ENCODE measurements at regions of chr15 and their contacts with region 1.

Region 1: DNA sequence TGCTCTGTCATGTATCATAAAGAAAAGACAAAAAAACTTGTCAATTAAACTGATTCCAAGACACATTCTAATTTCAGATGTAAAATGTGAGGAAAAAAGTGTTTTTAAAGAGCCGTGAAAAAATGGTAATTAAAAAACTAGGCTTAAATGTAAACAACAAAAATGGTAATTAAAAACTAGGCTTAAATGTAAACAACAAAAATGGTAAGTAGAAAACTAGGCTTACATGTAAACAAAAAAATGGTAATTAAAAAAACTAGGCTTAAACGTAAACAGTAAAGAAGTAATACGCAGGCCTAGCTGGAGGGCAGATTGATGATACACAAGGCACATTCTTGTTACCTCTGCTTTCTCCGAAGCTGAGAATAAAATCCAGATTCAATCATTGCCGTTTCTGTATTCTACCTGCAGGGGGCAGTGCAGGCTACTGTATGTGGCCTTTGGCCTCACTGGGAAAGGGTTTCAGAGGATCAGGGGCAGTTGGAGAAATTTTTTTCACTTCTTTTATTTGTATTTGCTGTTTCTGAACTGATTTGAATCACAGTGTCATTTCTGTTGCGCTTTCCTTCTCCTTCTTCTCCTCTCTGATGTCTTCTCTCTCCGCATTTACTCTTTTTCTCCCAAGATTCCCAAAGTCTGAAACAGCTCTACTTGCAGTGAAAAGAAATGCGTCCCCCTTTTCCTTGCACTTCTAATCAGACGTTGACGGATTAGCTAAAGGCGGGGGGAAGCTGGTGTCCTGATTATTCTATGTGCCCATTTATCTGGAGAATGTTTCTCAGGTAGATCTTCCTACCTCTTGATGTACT is 67.2 kb upstream of the MCTP2 start:
- DNase-seq: peak; percentile 74
- ATAC-seq: peak; percentile 58
- H3K4me3 ChIP-seq: no peak overlapping the region
- H3K4me3 Mint-ChIP-seq: no peak overlapping the region
- H3K27ac ChIP-seq: no peak overlapping the region
- H3K27ac Mint-ChIP-seq: no peak overlapping the region
- H3K4me1 ChIP-seq: no peaks in the 10 kb centered on the region
- H3K4me1 Mint-ChIP-seq: peaks cover 1% of the 10 kb centered on the region
- H3K27me3 ChIP-seq: peaks cover 0 to 11% (median 0%) of the 10 kb centered on the region in 4 experiments
- H3K27me3 Mint-ChIP-seq: no peaks in the 10 kb centered on the region
- CTCF ChIP-seq: peak; percentile 98

Region 2: GRCh38 chr15:94181106-94181505 is 16.9 kb after region 1 on chr15:
- CTCF ChIA-PET with region 1: interaction called, 13 read pairs
- POLR2A ChIA-PET with region 1: no interaction called
- intact Hi-C with region 1: no loop called
- DNase-seq: no peak
- ATAC-seq: no peak
- H3K4me3 ChIP-seq: no peak overlapping the region
- H3K4me3 Mint-ChIP-seq: no peak overlapping the region
- H3K27ac ChIP-seq: no peak overlapping the region
- H3K27ac Mint-ChIP-seq: no peak overlapping the region
- H3K4me1 ChIP-seq: no peaks in the 10 kb centered on the region
- H3K4me1 Mint-ChIP-seq: no peaks in the 10 kb centered on the region
- H3K27me3 ChIP-seq: peaks cover 0 to 7% (median 4%) of the 10 kb centered on the region in 4 experiments
- H3K27me3 Mint-ChIP-seq: peaks cover 33% of the 10 kb centered on the region
- CTCF ChIP-seq: no peak

Region 3: DNA sequence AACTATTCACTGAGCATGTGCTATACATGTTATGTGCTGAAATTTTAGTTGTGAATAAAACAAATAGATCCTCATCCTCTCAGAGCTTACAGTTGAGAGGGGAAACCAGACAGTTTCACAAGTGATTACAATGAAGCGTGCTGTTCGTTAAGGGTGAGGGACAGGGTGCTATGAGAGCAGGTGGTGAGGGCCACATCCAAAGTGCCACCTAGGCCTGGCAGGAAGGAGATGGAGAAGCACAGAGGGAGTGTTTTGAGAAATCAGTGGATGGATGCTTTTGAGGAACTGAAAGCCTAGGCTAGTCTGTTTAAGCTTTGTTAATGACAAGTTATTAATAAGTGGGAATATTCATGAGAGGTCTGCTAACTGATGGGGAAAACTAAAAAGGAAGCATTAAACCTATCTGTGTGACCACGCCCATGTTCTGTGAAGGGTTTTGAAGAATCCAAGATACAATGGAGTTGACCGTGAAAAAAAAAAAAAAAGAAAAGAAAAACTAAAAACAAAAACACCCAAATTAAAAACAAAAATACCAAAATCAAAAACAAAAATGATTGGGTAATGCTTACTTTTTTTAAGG is 74.4 kb after region 1 on chr15:
- CTCF ChIA-PET with region 1: interaction called, 63 read pairs
- POLR2A ChIA-PET with region 1: no interaction called
- intact Hi-C with region 1: no loop called
- DNase-seq: peak; percentile 77
- ATAC-seq: peak; percentile 74
- H3K4me3 ChIP-seq: no peak overlapping the region
- H3K4me3 Mint-ChIP-seq: peak overlapping the region; percentile 64
- H3K27ac ChIP-seq: peak overlapping the region; percentile 25 to 48
- H3K27ac Mint-ChIP-seq: peak overlapping the region; percentile 88
- H3K4me1 ChIP-seq: peaks cover 54 to 61% of the 10 kb centered on the region in 2 donors
- H3K4me1 Mint-ChIP-seq: peaks cover 79% of the 10 kb centered on the region
- H3K27me3 ChIP-seq: no peaks in the 10 kb centered on the region
- H3K27me3 Mint-ChIP-seq: no peaks in the 10 kb centered on the region
- CTCF ChIP-seq: no peak

Region 4: GRCh38 chr15:94306700-94307650 is 142.8 kb after region 1 on chr15:
- CTCF ChIA-PET with region 1: interaction called, 26 read pairs
- POLR2A ChIA-PET with region 1: no interaction called
- intact Hi-C with region 1: no loop called
- DNase-seq: peak; percentile 86
- ATAC-seq: peak; percentile 87
- H3K4me3 ChIP-seq: peak overlapping the region in 1 of 5 experiments; percentile 12
- H3K4me3 Mint-ChIP-seq: peak overlapping the region; percentile 64
- H3K27ac ChIP-seq: peak overlapping the region; percentile 58 to 64
- H3K27ac Mint-ChIP-seq: peak overlapping the region; percentile 91
- H3K4me1 ChIP-seq: peaks cover 27 to 41% of the 10 kb centered on the region in 2 donors
- H3K4me1 Mint-ChIP-seq: peaks cover 50% of the 10 kb centered on the region
- H3K27me3 ChIP-seq: no peaks in the 10 kb centered on the region
- H3K27me3 Mint-ChIP-seq: no peaks in the 10 kb centered on the region
- CTCF ChIP-seq: no peak

Region 5: DNA sequence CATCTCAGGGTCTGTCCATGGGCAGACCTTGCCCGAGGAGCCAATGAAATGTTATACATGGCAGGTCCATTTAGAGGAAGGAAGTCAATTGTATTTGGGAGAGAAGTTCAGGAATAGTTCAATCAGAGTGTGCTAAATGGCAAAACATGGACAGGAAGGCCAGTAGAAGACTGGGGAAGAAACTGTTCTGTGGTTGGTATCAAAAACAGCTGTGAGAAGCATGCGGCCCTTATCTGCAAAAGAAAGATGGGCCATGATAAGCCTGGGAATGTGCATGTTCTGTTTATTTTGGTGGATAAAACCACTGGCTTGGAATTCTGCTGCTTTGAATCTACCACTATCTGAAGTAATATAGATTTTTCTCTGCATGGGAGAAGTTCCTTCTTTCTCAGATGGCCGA is 167.5 kb after region 1 on chr15:
- CTCF ChIA-PET with region 1: interaction called, 511 read pairs
- POLR2A ChIA-PET with region 1: no interaction called
- intact Hi-C with region 1: no loop called
- DNase-seq: no peak
- ATAC-seq: no peak
- H3K4me3 ChIP-seq: no peak overlapping the region
- H3K4me3 Mint-ChIP-seq: no peak overlapping the region
- H3K27ac ChIP-seq: no peak overlapping the region
- H3K27ac Mint-ChIP-seq: no peak overlapping the region
- H3K4me1 ChIP-seq: no peaks in the 10 kb centered on the region
- H3K4me1 Mint-ChIP-seq: peaks cover 4% of the 10 kb centered on the region
- H3K27me3 ChIP-seq: no peaks in the 10 kb centered on the region
- H3K27me3 Mint-ChIP-seq: no peaks in the 10 kb centered on the region
- CTCF ChIP-seq: no peak

Region 6: GRCh38 chr15:94359721-94360120 is 195.5 kb after region 1 on chr15:
- CTCF ChIA-PET with region 1: interaction called, 15 read pairs
- POLR2A ChIA-PET with region 1: no interaction called
- intact Hi-C with region 1: no loop called
- DNase-seq: no peak
- ATAC-seq: no peak
- H3K4me3 ChIP-seq: no peak overlapping the region
- H3K4me3 Mint-ChIP-seq: no peak overlapping the region
- H3K27ac ChIP-seq: no peak overlapping the region
- H3K27ac Mint-ChIP-seq: no peak overlapping the region
- H3K4me1 ChIP-seq: no peaks in the 10 kb centered on the region
- H3K4me1 Mint-ChIP-seq: no peaks in the 10 kb centered on the region
- H3K27me3 ChIP-seq: no peaks in the 10 kb centered on the region
- H3K27me3 Mint-ChIP-seq: no peaks in the 10 kb centered on the region
- CTCF ChIP-seq: no peak

Measured in B cell (primary cell).